ENCODE measurements at regions of chr10 and their contacts with region 1.

Region 1: DNA sequence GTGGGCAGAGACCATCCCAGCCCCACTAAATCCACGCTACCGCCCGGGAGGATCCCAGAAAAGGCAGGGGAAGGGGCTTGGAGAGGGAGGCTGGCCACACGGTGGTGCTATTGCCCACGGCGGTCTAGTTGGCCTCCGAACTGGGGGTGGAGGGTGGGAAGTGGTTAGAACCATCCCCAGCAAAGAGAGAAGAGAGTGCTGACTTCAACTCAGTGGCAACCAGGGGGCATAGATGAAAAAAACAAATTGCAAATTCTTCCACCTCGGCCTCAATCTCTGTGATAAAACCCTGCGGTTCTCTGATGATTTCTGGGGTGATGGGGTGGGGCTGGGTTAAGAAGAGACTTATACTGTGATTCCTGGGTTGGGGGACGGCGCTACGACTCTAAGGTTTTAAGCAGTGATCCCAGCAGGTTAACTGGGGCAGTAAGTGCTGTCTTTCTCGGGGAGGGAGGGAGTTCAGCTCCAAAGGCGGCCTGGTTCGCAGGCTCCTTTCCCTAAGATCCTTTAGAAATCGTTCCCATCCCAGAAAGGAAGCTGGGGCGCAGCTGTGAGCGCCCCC is 154.5 kb upstream of the LYZL2 start:
- DNase-seq: peak; percentile 89
- H3K4me3 ChIP-seq: no peak overlapping the region
- H3K27ac ChIP-seq: peak overlapping the region; percentile 92
- H3K4me1 ChIP-seq: peaks cover 40% of the 10 kb centered on the region
- H3K27me3 ChIP-seq: no peaks in the 10 kb centered on the region
- CTCF ChIP-seq: peak; percentile 92
- POLR2A ChIP-seq: peak; percentile 56

Region 2: DNA sequence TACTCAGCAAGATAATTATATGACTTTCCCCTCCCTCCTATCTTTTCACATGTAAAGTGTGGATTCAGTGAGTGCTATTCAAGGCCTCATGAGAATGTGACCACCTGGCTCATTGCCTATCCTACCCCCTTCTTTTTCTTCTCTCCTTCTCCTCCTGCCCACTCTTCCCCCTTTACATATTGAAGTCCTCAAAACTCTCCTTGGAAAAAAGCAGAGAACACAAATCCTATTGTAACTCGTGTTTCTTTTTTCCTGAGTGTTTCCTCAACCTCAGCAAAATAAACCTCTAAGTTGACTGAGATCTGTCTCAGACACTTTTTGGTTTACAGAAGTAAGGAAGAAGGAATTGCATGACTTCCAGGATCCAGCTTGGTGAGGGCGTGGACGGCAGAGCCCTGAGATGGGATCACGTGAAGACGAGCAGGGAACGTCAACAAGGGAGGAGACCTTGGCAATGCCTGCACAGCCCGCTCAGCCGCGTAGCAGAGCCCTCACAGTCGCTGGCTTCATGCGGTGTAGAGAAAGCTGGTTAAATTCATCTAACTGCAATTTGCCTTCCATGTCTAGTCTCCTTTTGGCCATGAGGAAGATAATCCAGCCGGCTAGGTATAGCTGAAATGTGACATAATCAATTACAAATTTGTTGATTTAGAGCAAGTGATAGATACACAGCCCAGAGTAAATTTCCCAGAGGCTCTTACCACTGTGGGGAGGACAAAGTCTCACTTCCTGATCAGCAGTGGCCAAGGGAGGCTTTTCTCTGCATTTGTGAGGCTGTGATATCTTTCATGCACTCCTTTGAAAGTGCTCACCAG is 230.2 kb before region 1 on chr10:
- CTCF ChIA-PET with region 1: no interaction called
- POLR2A ChIA-PET with region 1: no interaction called
- dilution Hi-C with region 1: no loop called
- intact Hi-C with region 1: no loop called
- DNase-seq: peak; percentile 59
- H3K4me3 ChIP-seq: peak overlapping the region in 2 of 3 experiments; percentile 11 to 41
- H3K27ac ChIP-seq: no peak overlapping the region
- H3K4me1 ChIP-seq: peaks cover 7% of the 10 kb centered on the region
- H3K27me3 ChIP-seq: no peaks in the 10 kb centered on the region
- CTCF ChIP-seq: no peak
- POLR2A ChIP-seq: no peak

Region 3: GRCh38 chr10:30727524-30727923 is 56.5 kb before region 1 on chr10:
- CTCF ChIA-PET with region 1: interaction called, 4 read pairs
- POLR2A ChIA-PET with region 1: no interaction called
- dilution Hi-C with region 1: no loop called
- intact Hi-C with region 1: loop called (anchors 1 kb)
- DNase-seq: no peak
- H3K4me3 ChIP-seq: no peak overlapping the region
- H3K27ac ChIP-seq: no peak overlapping the region
- H3K4me1 ChIP-seq: no peaks in the 10 kb centered on the region
- H3K27me3 ChIP-seq: no peaks in the 10 kb centered on the region
- CTCF ChIP-seq: no peak
- POLR2A ChIP-seq: no peak

Region 4: DNA sequence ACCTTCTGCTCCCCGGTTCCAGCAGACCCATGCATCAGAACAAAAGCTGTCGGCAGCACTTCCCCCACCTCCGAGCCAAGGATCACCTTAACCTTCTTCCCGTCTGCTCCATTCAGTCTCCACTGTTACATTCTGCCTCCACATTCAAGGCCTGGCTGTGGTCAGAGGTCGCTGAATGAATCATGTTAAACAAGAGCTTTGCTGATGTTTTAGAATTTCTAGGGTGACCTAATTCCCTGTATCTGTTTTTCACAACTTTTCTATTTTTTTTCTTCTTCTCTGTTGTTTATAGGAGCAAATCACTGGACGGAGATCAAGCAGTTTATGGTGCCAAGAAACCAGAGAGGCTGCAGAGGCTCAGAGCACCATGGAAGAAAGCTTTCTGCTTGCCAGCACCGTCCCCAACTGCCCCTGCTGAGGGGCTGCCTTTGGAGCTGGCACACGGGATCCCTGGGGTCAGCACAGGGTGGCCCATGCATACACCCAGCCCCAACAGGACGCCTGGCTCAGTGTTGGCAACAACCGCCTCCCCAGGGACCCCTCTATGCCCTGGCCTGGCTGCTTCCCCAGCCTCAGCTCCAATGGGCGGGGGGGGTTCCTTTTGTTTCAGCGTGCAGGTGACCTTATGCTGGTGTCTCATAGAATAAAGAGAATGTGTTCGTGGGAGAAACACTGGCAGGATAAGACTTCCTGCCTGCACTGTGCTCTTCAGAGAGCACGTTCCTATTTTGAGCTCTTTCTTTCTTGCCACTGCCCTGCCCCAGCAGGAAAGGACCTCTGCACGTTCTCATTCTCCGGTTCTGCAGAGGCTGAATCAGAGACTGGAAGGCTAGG is 28.2 kb after region 1 on chr10:
- CTCF ChIA-PET with region 1: interaction called, 44 read pairs
- POLR2A ChIA-PET with region 1: interaction called, 10 read pairs
- dilution Hi-C with region 1: no loop called
- intact Hi-C with region 1: loop called (anchors 1 kb)
- DNase-seq: peak; percentile 96
- H3K4me3 ChIP-seq: no peak overlapping the region
- H3K27ac ChIP-seq: peak overlapping the region; percentile 96
- H3K4me1 ChIP-seq: peaks cover 54% of the 10 kb centered on the region
- H3K27me3 ChIP-seq: no peaks in the 10 kb centered on the region
- CTCF ChIP-seq: no peak
- POLR2A ChIP-seq: peak; percentile 29

Region 5: GRCh38 chr10:30963992-30964930 is 180.2 kb after region 1 on chr10:
- CTCF ChIA-PET with region 1: interaction called, 15 read pairs
- POLR2A ChIA-PET with region 1: no interaction called
- dilution Hi-C with region 1: no loop called
- intact Hi-C with region 1: loop called (anchors 1 kb)
- DNase-seq: peak; percentile 81
- H3K4me3 ChIP-seq: peak overlapping the region in 1 of 3 experiments; percentile 30
- H3K27ac ChIP-seq: peak overlapping the region; percentile 99
- H3K4me1 ChIP-seq: peaks cover 45% of the 10 kb centered on the region
- H3K27me3 ChIP-seq: no peaks in the 10 kb centered on the region
- CTCF ChIP-seq: no peak
- POLR2A ChIP-seq: peak; percentile 32

Region 6: GRCh38 chr10:31031558-31032257 is 247.7 kb after region 1 on chr10 and contains the start of gene ZNF438:
- CTCF ChIA-PET with region 1: interaction called, 32 read pairs
- POLR2A ChIA-PET with region 1: interaction called, 3 read pairs
- dilution Hi-C with region 1: no loop called
- intact Hi-C with region 1: loop called (anchors 1 kb)
- DNase-seq: peak; percentile 97
- H3K4me3 ChIP-seq: peak within 1 kb of the TSS in 2 of 3 experiments; percentile 50 to 66
- H3K27ac ChIP-seq: peak within 1 kb of the TSS; percentile 92
- H3K4me1 ChIP-seq: peaks cover 32% of the 10 kb centered on the region
- H3K27me3 ChIP-seq: no peaks in the 10 kb centered on the region
- CTCF ChIP-seq: peak; percentile 40 to 44
- POLR2A ChIP-seq: peak; percentile 82
- total RNA-seq, gene ZNF438: 11.2 and 15.1 TPM in 2 replicates

Region 7: GRCh38 chr10:31146491-31147209 is 362.6 kb after region 1 on chr10:
- CTCF ChIA-PET with region 1: no interaction called
- POLR2A ChIA-PET with region 1: no interaction called
- dilution Hi-C with region 1: no loop called
- intact Hi-C with region 1: no loop called
- DNase-seq: peak; percentile 53
- H3K4me3 ChIP-seq: no peak overlapping the region
- H3K27ac ChIP-seq: peak overlapping the region; percentile 16
- H3K4me1 ChIP-seq: peaks cover 13% of the 10 kb centered on the region
- H3K27me3 ChIP-seq: no peaks in the 10 kb centered on the region
- CTCF ChIP-seq: no peak
- POLR2A ChIP-seq: no peak

Region 8: DNA sequence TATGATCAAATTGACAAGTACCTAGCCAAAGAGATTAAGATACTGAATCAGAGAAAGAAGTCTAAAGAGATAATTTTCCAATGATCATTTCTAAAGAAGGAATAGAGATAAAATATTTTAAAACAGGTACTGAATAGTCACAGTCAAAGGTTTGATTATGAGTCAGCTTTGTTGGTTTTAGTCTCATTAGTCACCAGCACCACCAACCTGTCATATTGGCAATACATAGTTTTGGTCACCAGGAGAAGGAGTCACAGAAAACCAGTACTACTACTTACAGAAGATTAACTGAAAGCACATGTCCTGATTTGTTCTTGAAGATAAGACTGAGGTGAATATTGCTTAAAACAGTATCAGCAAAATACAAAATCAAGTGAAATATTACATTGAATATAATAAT is 569.6 kb after region 1 on chr10:
- CTCF ChIA-PET with region 1: interaction called, 7 read pairs
- POLR2A ChIA-PET with region 1: no interaction called
- dilution Hi-C with region 1: no loop called
- intact Hi-C with region 1: loop called (anchors 1 kb)
- DNase-seq: peak; percentile 66
- H3K4me3 ChIP-seq: no peak overlapping the region
- H3K27ac ChIP-seq: no peak overlapping the region
- H3K4me1 ChIP-seq: peaks cover 9% of the 10 kb centered on the region
- H3K27me3 ChIP-seq: no peaks in the 10 kb centered on the region
- CTCF ChIP-seq: no peak
- POLR2A ChIP-seq: no peak

Region 9: DNA sequence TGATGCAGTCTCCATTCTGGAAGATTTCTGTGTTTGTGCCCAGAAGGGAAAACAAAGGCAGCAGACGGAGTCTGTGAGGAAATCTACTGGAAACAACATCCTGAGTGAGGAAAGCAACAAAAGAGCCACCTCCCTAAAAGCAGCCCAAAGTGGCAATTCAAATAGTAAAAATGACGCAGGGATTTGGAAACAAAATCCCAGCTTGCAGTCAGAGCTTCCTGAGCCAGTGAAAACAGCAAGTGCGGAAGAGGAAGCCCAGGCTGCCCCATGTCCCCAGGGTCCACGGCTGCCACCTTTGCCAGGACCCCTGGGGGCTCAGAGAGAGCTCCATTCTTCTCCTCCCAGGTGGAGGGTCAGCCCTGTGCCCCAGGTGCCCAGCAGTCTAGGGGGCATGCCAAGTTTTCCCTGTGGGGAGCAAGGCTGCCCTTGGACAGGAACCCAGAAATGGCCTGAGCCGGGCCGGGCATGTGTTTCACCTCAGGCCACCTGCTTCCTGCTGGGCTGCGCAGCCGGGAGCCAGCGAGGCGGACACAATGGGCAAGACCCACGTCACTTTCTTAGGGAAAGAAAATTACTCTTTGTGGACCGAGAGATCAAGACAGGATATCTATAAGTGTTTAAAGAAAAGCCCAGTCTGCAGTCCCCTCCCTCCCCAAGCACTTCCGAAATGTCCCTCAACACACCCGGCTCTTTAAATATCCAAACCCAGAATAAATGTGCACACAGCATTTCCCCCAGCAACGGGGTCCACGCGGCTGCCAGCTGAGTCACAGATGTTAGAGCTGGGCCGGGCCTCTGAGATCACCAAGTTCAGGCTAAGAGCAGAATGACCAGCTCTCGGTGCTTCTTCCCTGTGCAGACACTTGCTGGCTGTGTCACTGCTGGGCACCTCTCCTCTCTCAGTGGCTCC is 913.5 kb after region 1 on chr10:
- CTCF ChIA-PET with region 1: no interaction called
- POLR2A ChIA-PET with region 1: interaction called, 3 read pairs
- dilution Hi-C with region 1: no loop called
- intact Hi-C with region 1: loop called (anchors 1 kb)
- DNase-seq: peak; percentile 98
- H3K4me3 ChIP-seq: peak overlapping the region in 1 of 3 experiments; percentile 24
- H3K27ac ChIP-seq: peak overlapping the region; percentile 90
- H3K4me1 ChIP-seq: peaks cover 57% of the 10 kb centered on the region
- H3K27me3 ChIP-seq: no peaks in the 10 kb centered on the region
- CTCF ChIP-seq: no peak
- POLR2A ChIP-seq: peak; percentile 75